Caco-2 (cell line): ENCODE measurements at regions of chr7 and their contacts with region 1.

Region 1: DNA sequence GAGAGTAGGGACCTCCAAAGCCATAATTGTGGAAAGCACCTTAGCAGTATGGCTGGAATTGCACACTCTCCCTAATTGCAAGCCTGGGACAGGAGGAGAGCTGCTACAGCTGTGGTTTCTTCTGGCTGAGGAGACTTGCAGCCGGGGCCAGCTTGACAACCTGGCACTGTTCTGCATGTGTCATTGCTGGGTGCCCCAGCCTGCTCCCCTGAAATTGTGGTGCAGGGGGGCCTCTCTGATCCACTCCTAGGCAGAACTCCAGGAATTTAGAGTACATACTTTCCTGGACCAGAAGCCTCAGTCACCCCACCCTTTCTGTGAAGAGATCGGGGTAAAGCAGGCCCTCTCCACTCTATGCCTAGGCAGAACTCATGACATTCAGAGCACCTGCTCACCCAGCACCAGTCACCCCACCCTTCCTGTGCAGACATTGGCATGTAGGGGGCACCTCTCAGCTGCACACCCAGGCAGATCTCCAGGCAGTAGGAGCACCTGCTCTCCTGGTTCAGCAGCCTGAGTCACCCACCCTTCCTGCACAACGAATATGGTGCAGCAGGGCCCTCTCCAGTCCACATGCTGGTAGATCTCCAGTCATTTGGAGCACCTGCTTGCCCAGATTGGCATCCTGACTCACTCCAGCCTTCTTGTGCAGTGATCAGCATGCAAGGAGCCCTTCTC is 34.4 kb upstream of the DYNC1I1 start:
- DNase-seq: no peak
- H3K4me3 ChIP-seq: no peak overlapping the region
- H3K4me3 Mint-ChIP-seq: no peak overlapping the region
- H3K27ac Mint-ChIP-seq: no peak overlapping the region
- H3K4me1 ChIP-seq: no peaks in the 10 kb centered on the region
- H3K4me1 Mint-ChIP-seq: no peaks in the 10 kb centered on the region
- H3K27me3 ChIP-seq: no peaks in the 10 kb centered on the region
- H3K27me3 Mint-ChIP-seq: peaks cover 22% of the 10 kb centered on the region
- CTCF ChIP-seq: no peak

Region 2: GRCh38 chr7:95660023-95660434 is 77.9 kb before region 1 on chr7:
- CTCF ChIA-PET with region 1: no interaction called
- POLR2A ChIA-PET with region 1: no interaction called
- intact Hi-C with region 1: loop called (anchors 2 kb)
- DNase-seq: peak; percentile 30 to 52
- H3K4me3 ChIP-seq: no peak overlapping the region
- H3K4me3 Mint-ChIP-seq: no peak overlapping the region
- H3K27ac Mint-ChIP-seq: no peak overlapping the region
- H3K4me1 ChIP-seq: peaks cover 14% of the 10 kb centered on the region
- H3K4me1 Mint-ChIP-seq: peaks cover 9% of the 10 kb centered on the region
- H3K27me3 ChIP-seq: no peaks in the 10 kb centered on the region
- H3K27me3 Mint-ChIP-seq: no peaks in the 10 kb centered on the region
- CTCF ChIP-seq: no peak

Region 3: GRCh38 chr7:95828824-95829790 is 91.1 kb after region 1 on chr7:
- CTCF ChIA-PET with region 1: no interaction called
- POLR2A ChIA-PET with region 1: no interaction called
- intact Hi-C with region 1: no loop called
- DNase-seq: no peak
- H3K4me3 ChIP-seq: no peak overlapping the region
- H3K4me3 Mint-ChIP-seq: no peak overlapping the region
- H3K27ac Mint-ChIP-seq: no peak overlapping the region
- H3K4me1 ChIP-seq: peaks cover 13% of the 10 kb centered on the region
- H3K4me1 Mint-ChIP-seq: peaks cover 6% of the 10 kb centered on the region
- H3K27me3 ChIP-seq: no peaks in the 10 kb centered on the region
- H3K27me3 Mint-ChIP-seq: no peaks in the 10 kb centered on the region
- CTCF ChIP-seq: no peak

Region 4: DNA sequence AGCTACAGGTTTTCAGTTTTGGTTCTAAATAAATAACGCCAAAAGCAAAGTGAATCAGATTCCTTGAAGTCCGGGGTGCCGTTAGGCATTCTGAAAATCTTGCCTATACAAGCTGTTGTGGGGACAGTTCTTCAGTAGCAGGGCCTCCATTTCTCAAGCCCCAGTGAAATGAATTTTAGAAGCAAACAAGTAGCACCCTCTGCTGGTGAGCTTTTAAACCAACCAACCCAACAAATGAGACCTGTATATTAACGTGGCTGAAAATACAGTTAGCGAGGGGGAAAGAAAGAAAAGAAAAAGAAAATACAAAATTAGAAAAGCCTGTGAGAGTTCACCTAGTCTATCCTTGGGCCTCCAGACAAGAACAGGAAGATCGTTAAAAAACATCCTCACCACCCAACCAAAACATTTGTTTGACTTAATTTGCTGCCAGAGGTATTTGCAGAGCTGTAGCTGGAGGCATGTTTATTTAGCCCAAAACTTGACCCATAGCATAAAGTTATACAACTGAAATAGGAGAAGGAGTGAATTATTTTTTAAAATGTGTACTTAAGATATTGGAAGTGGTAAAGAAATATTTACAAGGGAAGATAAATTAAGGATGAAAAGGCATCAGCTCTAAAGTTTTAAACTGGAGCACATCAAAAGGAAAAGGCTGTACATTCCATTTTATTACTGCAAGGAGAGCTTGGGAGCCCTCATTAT is 133.3 kb after region 1 on chr7:
- CTCF ChIA-PET with region 1: no interaction called
- POLR2A ChIA-PET with region 1: no interaction called
- intact Hi-C with region 1: no loop called
- DNase-seq: peak; percentile 46 to 59
- H3K4me3 ChIP-seq: no peak overlapping the region
- H3K4me3 Mint-ChIP-seq: no peak overlapping the region
- H3K27ac Mint-ChIP-seq: no peak overlapping the region
- H3K4me1 ChIP-seq: no peaks in the 10 kb centered on the region
- H3K4me1 Mint-ChIP-seq: no peaks in the 10 kb centered on the region
- H3K27me3 ChIP-seq: no peaks in the 10 kb centered on the region
- H3K27me3 Mint-ChIP-seq: peaks cover 3% of the 10 kb centered on the region
- CTCF ChIP-seq: peak; percentile 58 to 63